ENCODE measurements at regions of chr6 and their contacts with region 1.

Region 1: DNA sequence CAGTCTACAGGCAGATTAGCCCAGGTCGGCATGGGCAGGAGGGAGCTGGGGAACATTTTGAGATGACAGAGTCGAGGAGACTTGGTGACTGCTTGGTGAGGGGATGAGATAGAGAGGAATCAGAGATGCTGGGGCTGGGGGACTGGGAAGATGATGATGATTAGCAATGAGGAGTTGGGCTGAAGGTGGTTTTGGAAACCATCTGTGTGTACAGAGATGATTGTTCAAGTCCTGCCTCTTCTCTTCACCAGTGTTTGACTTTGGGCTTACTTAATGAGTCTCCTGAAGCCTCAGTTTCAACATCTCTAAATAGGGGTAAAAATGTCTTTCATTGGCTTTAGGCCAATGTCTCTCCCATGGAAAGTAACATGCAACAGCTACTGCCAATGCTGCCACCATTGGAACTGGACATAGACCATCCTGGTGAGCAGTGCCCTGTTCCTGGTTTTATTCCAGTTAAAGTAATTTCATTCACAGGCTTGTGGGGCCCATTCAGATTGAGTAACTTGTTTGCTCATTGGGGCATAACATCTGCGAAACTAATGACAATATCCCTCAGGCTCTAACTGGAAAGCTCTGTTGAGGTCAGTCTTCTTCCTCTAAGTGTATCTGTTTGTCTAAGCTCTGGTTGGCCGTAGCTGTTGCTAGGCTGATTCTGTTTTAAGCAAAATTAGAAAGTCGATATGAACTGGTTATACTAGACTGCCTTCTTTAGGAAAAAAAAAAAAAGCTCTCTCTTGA is 99.1 kb downstream of the ARMC2 start:
- DNase-seq: no peak
- H3K4me3 Mint-ChIP-seq: peak overlapping the region; percentile 53
- H3K27ac Mint-ChIP-seq: peak overlapping the region; percentile 91
- H3K4me1 Mint-ChIP-seq: peaks cover 54% of the 10 kb centered on the region
- H3K27me3 Mint-ChIP-seq: peaks cover 7% of the 10 kb centered on the region

Region 2: DNA sequence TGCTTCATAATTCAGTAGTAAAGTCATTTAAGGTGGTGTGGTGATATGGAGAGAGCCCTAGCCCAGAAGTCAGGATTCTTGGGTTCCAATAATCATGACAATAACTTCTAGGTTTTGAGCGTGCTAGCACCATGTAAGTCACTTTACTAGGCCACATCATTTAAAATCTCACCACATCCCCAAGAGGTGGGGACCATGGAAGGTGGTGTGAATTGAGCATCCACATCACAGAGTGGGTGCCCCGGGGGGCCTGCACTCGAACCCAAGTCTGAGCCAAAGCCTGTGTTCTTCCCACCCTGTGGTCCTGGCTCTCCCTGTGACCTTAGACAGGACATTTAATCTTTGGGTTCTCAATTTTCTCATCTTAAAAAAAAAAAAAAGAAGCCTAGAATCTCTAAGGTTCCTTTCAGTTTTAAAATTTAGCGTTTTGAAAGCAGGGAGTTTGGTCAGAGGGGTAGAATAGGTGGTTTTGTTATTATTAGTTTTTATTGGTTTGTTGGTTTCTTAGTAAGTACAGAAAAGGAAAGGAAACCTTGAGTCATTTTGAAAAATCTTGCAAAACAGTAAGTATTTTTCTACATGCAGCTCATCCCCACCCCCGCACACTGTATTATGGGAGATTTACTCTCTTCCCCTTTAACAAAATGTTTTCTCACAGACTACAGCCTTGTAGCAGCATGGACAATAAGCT is 72.7 kb before region 1 on chr6:
- intact Hi-C with region 1: loop called (anchors 2 kb)
- DNase-seq: peak; percentile 51
- H3K4me3 Mint-ChIP-seq: peak overlapping the region; percentile 34
- H3K27ac Mint-ChIP-seq: peak overlapping the region; percentile 96
- H3K4me1 Mint-ChIP-seq: peaks cover 80% of the 10 kb centered on the region
- H3K27me3 Mint-ChIP-seq: peaks cover 4% of the 10 kb centered on the region

Region 3: DNA sequence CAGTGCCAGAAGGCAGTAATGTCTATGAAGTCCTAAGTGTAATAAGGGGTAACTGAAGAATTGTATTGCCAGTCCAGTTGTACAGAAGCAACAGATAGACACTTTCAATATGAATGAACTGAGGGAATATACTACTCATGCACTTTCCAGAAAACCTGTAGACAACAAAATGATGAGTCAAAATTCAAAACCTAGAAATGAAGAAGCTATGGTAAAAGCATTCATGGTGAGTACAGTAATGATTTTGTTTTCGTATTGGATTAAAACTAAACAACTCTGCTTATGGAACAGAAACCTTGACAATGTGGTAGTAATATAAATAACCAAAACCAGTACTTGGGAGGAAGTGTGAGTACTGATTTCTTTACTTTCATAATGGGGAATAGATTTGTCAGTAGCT is 64.1 kb before region 1 on chr6:
- intact Hi-C with region 1: loop called (anchors 2 kb)
- DNase-seq: no peak
- H3K4me3 Mint-ChIP-seq: peak overlapping the region; percentile 56
- H3K27ac Mint-ChIP-seq: peak overlapping the region; percentile 93
- H3K4me1 Mint-ChIP-seq: peaks cover 58% of the 10 kb centered on the region
- H3K27me3 Mint-ChIP-seq: peaks cover 28% of the 10 kb centered on the region

Region 4: DNA sequence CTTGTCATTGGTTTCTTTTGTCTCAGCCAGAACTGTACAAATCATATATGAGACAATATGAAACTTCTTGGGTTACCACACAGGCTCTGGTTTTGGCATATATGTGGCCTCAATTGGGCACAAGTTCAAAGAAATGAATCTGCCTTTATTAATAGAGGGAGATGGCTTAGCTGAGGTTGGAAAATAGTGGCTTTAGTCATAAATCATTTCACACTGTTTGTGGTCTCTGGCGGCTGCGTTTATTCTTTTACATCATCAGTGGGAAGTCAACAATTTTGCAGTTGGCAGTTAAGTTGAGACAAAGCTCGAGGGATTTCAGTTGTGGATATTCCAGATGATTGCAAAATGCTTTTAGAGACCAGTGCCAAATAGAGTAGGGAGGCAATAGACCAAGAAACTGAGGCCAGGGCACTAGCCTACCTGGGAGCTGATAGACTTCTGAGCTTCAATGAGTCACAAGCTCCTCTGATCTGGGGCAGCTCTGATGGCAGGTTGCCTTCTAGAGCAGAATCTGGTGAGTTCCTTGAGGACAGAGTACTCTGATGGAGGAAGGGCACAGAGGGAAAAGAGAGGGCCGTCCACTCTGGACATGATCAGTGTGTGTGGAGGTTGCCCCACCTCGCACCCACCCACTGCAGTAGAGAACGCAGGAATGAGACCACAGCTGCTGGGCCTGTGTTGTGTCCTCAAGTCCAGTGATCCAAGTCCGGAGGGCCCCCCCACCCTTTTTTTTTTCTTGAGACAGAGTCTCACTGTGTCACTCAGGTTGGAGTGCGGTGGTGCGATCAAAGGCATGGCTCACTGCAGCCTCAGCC is 25.5 kb before region 1 on chr6:
- intact Hi-C with region 1: loop called (anchors 1 kb)
- DNase-seq: no peak
- H3K4me3 Mint-ChIP-seq: peak overlapping the region; percentile 8
- H3K27ac Mint-ChIP-seq: peak overlapping the region; percentile 63
- H3K4me1 Mint-ChIP-seq: peaks cover 34% of the 10 kb centered on the region
- H3K27me3 Mint-ChIP-seq: peaks cover 22% of the 10 kb centered on the region

Region 5: DNA sequence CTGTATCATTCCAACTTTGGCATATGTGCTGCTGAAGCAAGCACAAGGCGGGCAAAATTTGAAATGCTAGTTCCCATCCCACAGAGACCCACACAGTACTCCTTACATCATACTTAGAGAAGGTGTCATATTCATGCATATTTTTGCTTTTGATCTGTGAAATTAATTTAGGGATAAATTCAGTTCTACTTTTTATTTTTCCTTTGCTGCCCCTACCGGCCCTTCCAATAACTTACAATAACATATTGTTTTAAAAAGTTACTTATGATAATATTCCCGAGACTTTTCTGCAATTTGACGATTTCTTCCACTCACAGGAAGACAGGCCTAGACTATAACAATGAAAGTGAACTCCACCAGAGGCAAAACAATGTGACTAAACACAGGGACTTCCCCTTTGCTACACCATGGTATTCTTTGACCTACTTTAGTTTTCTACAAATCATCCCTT is 112.3 kb after region 1 on chr6:
- intact Hi-C with region 1: loop called (anchors 5 kb)
- DNase-seq: no peak
- H3K4me3 Mint-ChIP-seq: no peak overlapping the region
- H3K27ac Mint-ChIP-seq: peak overlapping the region; percentile 72
- H3K4me1 Mint-ChIP-seq: peaks cover 13% of the 10 kb centered on the region
- H3K27me3 Mint-ChIP-seq: peaks cover 9% of the 10 kb centered on the region

Region 6: DNA sequence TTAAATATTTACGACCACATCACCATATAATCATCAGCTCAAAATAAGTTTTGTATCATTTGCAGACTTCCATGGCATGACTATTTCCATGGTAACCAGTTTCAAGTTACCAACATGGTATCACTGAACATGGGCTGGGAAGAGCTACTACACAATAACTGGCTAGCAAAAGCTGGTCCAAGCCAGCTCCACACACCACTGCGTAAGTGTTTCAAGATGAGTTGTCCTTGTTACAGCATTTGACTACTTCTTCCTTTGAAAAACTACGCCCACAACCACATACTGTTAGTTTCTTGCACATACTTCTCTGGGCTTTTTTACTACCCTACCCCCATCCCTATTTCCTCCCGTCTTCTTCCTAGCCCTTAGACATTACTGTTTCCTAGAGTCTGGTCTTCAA is 426.5 kb after region 1 on chr6:
- intact Hi-C with region 1: loop called (anchors 10 kb)
- DNase-seq: peak; percentile 46
- H3K4me3 Mint-ChIP-seq: peak overlapping the region; percentile 81
- H3K27ac Mint-ChIP-seq: peak overlapping the region; percentile 92
- H3K4me1 Mint-ChIP-seq: peaks cover 75% of the 10 kb centered on the region
- H3K27me3 Mint-ChIP-seq: no peaks in the 10 kb centered on the region

Region 7: DNA sequence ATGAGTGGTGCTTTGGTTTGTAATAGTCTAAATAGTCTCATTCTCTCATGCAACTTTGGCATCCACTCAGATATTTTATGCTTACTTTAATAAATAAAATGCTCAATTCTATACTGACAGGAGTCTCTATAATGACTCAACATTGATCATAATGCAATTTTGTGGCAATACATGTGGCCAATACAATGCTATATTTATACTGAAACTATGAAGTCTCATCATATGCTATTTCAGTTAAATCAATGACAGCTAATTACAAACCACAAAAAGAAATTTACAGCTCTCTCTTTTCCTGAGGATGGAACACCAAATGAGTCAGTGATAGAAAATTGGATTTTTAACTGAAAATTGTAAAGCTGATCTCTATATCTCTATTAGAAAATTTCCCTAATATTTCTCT is 1155.1 kb after region 1 on chr6:
- intact Hi-C with region 1: no loop called
- DNase-seq: no peak
- H3K4me3 Mint-ChIP-seq: no peak overlapping the region
- H3K27ac Mint-ChIP-seq: no peak overlapping the region
- H3K4me1 Mint-ChIP-seq: no peaks in the 10 kb centered on the region
- H3K27me3 Mint-ChIP-seq: peaks cover 2% of the 10 kb centered on the region

Measured in activated T-helper 1 cell treated with anti-CD3 and anti-CD28 coated beads, Interleukin-12 subunit alpha, Interleukin-12 subunit beta, Interleukin-2, Interleukin-4 antibody, amounts not matched to agents 30 ng/mL and 10 ng/mL and 1 ng/mL, durations not matched to agents 14 hours and 24 hours and 36 hours (primary cell).